ENCODE measurements at regions of chr1 and their contacts with region 1.

Region 1: DNA sequence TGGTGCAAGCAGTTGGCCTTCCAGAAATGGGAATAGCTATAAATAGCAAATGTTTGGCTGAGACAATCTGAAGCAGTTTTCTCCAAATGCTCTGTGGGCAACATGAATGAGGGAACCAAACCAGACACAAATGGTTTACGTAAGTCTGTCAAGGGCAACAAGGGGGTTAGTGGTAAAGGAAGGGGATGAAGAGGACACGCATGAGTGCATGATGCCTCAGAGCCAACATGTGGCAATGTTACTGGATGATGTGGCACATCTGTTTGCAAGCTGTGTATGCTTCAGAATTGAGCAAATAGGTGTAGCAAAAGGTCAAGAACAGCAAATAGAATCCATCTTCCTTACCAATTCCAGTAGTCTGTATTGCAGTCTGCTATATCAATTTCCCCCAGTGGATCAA is 76.3 kb upstream of the LMO4 start:
- DNase-seq: peak; percentile 76
- ATAC-seq: no peak
- H3K4me3 ChIP-seq: no peak overlapping the region
- H3K27ac ChIP-seq: no peak overlapping the region
- H3K4me1 ChIP-seq: no peaks in the 10 kb centered on the region
- H3K27me3 ChIP-seq: no peaks in the 10 kb centered on the region
- CTCF ChIP-seq: no peak
- POLR2A ChIP-seq: no peak
- RAD21 ChIP-seq: no peak

Region 2: DNA sequence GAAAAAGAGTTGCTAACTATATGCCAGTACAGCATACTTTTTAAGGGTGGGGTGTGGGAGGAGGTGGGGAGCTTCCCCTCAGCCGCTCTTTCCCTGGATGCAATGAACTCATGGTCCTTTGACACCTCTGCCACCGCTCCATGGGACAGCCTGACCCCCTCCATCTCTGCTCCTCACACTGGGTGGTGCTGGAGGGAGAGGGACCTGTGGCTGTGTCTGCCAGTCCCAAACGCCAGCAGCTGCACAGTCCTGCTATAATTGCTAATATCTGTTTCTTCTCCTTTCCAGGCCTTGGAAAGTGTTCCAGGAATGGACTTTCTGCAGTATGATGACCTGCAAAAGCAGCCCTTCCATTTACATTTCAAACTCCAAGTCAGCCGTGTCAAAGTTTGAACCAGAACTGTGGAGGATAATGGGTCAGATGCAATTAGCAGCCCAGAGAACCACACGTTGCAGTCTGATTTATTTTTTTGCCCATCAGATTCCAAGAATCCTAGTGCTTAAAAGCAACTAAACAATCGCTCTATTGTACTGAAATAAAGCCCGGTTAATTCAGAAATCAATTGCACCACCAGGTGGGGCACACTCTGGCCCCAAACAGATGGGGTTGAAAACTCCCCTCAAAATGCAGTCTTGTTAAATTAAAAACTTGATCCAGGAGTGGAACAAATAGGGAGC is 84.4 kb before region 1 on chr1:
- CTCF ChIA-PET with region 1: no interaction called
- POLR2A ChIA-PET with region 1: no interaction called
- dilution Hi-C with region 1: no loop called
- in situ Hi-C with region 1: no loop called
- intact Hi-C with region 1: loop called (anchors 5 kb)
- DNase-seq: no peak
- ATAC-seq: no peak
- H3K4me3 ChIP-seq: no peak overlapping the region
- H3K27ac ChIP-seq: no peak overlapping the region
- H3K4me1 ChIP-seq: no peaks in the 10 kb centered on the region
- H3K27me3 ChIP-seq: peaks cover 3% of the 10 kb centered on the region
- CTCF ChIP-seq: no peak
- POLR2A ChIP-seq: no peak
- RAD21 ChIP-seq: no peak

Measured in IMR-90 (cell line).